ENCODE measurements at regions of chrX and their contacts with region 1.

Region 1: DNA sequence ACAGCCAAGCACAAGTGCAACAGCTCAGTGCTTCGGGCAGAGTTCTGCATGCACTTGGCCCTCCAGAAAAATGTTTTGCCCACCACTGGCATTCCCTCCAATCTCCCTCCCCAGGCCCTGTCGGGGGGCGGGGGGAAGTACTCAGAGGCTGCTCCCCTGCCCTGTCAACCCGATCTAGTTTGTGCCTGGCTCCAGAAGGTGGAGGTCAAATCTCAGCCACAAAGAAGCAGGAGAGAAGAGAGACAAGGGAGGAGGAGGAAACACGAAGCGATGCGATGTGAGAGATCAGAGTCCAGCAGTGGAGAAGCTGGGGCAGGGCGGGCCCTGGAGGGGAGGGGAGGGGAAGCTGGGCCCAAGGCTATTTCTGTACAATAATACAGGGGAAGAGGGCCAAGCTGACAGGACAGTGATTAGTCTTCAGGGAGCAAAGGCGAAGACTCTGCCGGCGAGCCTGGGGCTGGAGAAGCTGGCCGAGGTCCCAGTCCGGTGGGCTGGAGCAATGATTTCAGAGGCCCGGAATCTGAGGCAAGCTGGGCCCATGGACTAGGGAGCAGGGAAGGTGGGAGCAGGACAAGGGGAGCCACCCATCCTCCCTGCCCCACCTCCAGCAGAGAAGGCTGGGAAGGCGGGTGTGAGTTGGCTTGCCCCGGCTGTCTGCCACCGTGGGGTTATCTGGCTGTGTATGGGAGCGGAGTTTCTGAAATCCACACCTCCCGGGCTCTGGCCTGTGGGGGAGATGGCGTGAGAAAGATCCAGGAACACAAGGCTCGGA is 167.1 kb downstream of the EFNB1 start:
- DNase-seq: no peak
- H3K4me3 ChIP-seq: no peak overlapping the region
- H3K27ac ChIP-seq: no peak overlapping the region
- H3K4me1 ChIP-seq: peaks cover 28% of the 10 kb centered on the region
- H3K27me3 ChIP-seq: no peaks in the 10 kb centered on the region
- CTCF ChIP-seq: no peak

Region 2: GRCh38 chrX:68807818-68808217 is 188.1 kb before region 1 on chrX:
- CTCF ChIA-PET with region 1: no interaction called
- POLR2A ChIA-PET with region 1: no interaction called
- intact Hi-C with region 1: no loop called
- DNase-seq: peak in 1 of 2 experiments; percentile 7
- H3K4me3 ChIP-seq: no peak overlapping the region
- H3K27ac ChIP-seq: no peak overlapping the region
- H3K4me1 ChIP-seq: no peaks in the 10 kb centered on the region
- H3K27me3 ChIP-seq: no peaks in the 10 kb centered on the region
- CTCF ChIP-seq: peak; percentile 31; the same call in 1 of the 2 replicates

Region 3: DNA sequence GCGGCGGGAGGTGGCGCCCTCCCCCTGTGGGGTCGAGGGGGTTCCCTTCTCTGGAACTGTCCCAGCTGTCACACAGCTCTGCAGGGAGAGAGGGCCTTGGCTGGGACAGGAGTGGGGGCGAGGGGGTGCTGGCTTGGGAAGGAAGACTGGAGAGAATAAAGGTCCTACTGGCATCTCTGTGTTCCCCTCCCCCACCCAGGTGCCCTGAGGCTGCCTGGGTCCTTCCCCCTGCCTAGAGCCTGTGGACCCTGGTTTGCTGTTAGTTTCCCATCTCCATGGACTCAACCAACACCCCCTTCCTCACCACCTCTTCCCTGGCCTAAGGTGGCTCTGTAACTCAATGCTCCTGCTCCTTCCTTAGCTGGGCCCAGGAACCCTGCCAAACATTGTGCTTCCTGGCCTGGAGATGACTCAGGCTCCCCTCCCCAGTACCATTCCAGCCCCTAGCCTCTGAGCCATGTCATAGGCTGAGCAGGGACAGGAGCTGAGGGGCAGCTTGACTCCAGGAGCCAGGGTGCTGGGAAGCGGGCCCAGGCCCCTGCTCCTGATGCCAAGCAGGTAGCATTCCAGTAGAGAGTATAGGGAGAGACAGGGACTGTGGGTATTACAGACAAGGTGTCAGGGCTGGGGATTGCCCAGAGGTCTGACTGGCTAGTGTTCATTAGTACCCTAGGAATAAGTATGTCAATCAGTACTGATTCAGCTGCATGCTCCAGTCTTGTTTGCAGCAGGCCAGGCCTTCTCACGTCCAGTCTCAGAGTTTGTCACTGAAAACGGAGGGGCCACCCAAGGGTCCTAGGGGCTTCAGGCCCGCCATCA is 66.4 kb before region 1 on chrX:
- CTCF ChIA-PET with region 1: no interaction called
- POLR2A ChIA-PET with region 1: interaction called, 5 read pairs
- intact Hi-C with region 1: loop called (anchors 5 kb)
- DNase-seq: peak; percentile 64 to 77
- H3K4me3 ChIP-seq: no peak overlapping the region
- H3K27ac ChIP-seq: no peak overlapping the region
- H3K4me1 ChIP-seq: peaks cover 26% of the 10 kb centered on the region
- H3K27me3 ChIP-seq: no peaks in the 10 kb centered on the region
- CTCF ChIP-seq: no peak

Measured in PC-9 (cell line).